Ascending aorta (tissue), 2 donors: ENCODE measurements at regions of chr18 and their contacts with region 1.

Region 1: DNA sequence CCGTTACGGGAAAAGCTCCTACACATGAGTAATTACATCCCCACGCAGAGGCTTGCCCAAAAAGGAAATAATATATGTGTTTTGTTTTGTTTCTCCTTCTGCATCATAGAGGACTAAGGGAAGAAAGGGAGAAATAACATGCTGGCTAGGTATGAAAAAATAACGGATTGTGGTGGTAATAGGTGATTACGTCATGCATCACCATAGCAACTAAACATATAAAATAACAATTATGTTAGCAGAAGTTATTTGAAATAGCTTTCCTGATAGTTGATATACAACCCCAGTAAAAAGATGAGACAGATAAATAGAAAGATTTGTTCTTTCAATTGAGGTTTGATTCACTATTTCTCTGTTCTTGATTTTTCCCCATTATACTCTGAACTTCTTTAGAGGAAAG is 518.0 kb downstream of the ZNF516 start:
- DNase-seq: no peak
- H3K4me3 ChIP-seq: no peak overlapping the region
- H3K27ac ChIP-seq: no peak overlapping the region
- H3K4me1 ChIP-seq: no peaks in the 10 kb centered on the region
- H3K27me3 ChIP-seq: no peaks in the 10 kb centered on the region
- CTCF ChIP-seq: no peak

Region 2: DNA sequence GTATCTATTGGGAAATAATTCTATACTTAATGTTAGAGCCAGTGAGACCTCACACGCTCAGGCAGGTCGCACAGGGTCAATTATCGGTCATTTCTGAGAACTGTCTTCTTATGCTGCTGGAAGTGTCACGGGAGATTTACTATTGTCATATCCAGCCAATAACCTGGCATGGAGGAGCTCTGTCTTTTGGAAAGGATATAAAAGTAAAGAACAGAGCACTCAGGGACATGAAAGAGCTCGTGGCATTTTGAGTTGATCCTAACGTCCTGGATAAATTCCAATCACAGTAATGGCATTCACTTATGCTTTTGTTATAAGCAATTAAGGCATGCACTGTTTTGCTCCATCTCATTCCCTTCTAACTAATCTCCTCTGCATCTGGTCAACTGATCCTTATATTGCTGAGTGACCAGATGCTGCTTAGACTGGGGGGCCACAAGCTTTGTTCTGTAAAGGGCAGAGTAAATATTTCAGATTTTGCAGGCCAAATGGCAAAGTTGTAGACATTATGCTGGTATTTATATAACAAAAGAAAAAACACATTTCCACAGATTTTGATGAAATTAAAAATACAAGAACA is 96.1 kb before region 1 on chr18:
- intact Hi-C with region 1: no loop called
- DNase-seq: no peak
- H3K4me3 ChIP-seq: no peak overlapping the region
- H3K27ac ChIP-seq: no peak overlapping the region
- H3K4me1 ChIP-seq: no peaks in the 10 kb centered on the region
- H3K27me3 ChIP-seq: no peaks in the 10 kb centered on the region
- CTCF ChIP-seq: no peak

Region 3: GRCh38 chr18:75966431-75966830 is 10.7 kb before region 1 on chr18:
- intact Hi-C with region 1: loop called (anchors 1 kb)
- DNase-seq: no peak
- H3K4me3 ChIP-seq: no peak overlapping the region
- H3K27ac ChIP-seq: no peak overlapping the region
- H3K4me1 ChIP-seq: no peaks in the 10 kb centered on the region
- H3K27me3 ChIP-seq: no peaks in the 10 kb centered on the region
- CTCF ChIP-seq: no peak